SK-N-SH (cell line): ENCODE measurements at regions of chr20 and their contacts with region 1.

Region 1: GRCh38 chr20:22453239-22454080 is 130.9 kb downstream of the FOXA2 start:
- DNase-seq: peak; percentile 25
- H3K4me3 ChIP-seq: no peak overlapping the region
- H3K27ac ChIP-seq: no peak overlapping the region
- H3K4me1 ChIP-seq: no peaks in the 10 kb centered on the region
- H3K27me3 ChIP-seq: peaks cover 16% of the 10 kb centered on the region
- CTCF ChIP-seq: peak; percentile 74
- EP300 ChIP-seq: no peak
- RAD21 ChIP-seq: 0 out of 2 replicates have a peak, but pooled peaks have one; percentile 19

Region 2: DNA sequence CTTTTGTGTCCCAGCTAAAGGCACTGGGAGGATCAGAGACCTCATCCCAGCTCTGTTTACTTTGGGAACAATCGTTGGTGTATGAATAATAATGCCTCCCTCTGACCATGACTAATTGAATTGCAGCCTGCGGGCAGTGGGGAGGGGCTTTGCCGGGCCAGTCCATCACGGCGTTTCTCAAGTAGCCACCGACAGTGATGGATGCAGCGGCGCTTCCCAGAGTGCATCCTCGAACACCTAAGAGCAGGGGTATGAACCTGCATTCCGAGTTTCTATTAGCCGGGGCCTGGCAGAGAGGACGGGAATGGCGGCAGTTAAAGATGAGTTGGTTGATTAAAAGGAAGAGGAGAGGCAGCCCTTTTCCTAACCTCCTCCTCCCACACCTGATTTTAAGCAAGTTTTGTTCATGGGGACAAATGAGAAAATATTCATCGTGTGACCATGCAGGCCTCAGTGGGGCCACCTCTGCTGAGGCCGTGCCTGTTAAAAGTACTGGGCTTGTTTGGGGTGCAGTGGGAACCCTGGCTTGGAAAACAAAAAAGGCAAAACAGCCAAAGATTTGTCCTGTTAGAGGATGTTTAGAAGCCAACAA is 23.2 kb before region 1 on chr20:
- CTCF ChIA-PET with region 1: interaction called, 11 read pairs
- POLR2A ChIA-PET with region 1: no interaction called
- DNase-seq: no peak
- H3K4me3 ChIP-seq: no peak overlapping the region
- H3K27ac ChIP-seq: no peak overlapping the region
- H3K4me1 ChIP-seq: no peaks in the 10 kb centered on the region
- H3K27me3 ChIP-seq: no peaks in the 10 kb centered on the region; the same call in 1 of the 2 replicates
- CTCF ChIP-seq: no peak
- EP300 ChIP-seq: no peak
- RAD21 ChIP-seq: no peak

Region 3: GRCh38 chr20:22438932-22439331 is 14.5 kb before region 1 on chr20:
- CTCF ChIA-PET with region 1: interaction called, 14 read pairs
- POLR2A ChIA-PET with region 1: no interaction called
- DNase-seq: peak; percentile 9
- H3K4me3 ChIP-seq: no peak overlapping the region
- H3K27ac ChIP-seq: no peak overlapping the region
- H3K4me1 ChIP-seq: no peaks in the 10 kb centered on the region
- H3K27me3 ChIP-seq: peaks cover 16% of the 10 kb centered on the region; the same call in 1 of the 2 replicates
- CTCF ChIP-seq: peak; percentile 42
- EP300 ChIP-seq: no peak
- RAD21 ChIP-seq: no peak

Region 4: GRCh38 chr20:22805219-22805618 is 351.8 kb after region 1 on chr20:
- CTCF ChIA-PET with region 1: no interaction called
- POLR2A ChIA-PET with region 1: no interaction called
- DNase-seq: no peak
- H3K4me3 ChIP-seq: no peak overlapping the region
- H3K27ac ChIP-seq: no peak overlapping the region
- H3K4me1 ChIP-seq: no peaks in the 10 kb centered on the region
- H3K27me3 ChIP-seq: no peaks in the 10 kb centered on the region; the same call in 1 of the 2 replicates
- CTCF ChIP-seq: no peak
- EP300 ChIP-seq: no peak
- RAD21 ChIP-seq: no peak